ENCODE measurements at regions of chr7 and their contacts with region 1.

Region 1: GRCh38 chr7:55400191-55400590 is 35.1 kb downstream of the LANCL2 start:
- DNase-seq: no peak
- H3K27ac ChIP-seq: no peak overlapping the region
- CTCF ChIP-seq: no peak

Region 2: GRCh38 chr7:55158541-55159382 is 241.4 kb before region 1 on chr7:
- CTCF ChIA-PET with region 1: no interaction called
- POLR2A ChIA-PET with region 1: no interaction called
- DNase-seq: no peak
- H3K27ac ChIP-seq: peak overlapping the region; percentile 31
- CTCF ChIP-seq: no peak

Region 3: GRCh38 chr7:55185941-55186609 is 214.1 kb before region 1 on chr7:
- CTCF ChIA-PET with region 1: no interaction called
- POLR2A ChIA-PET with region 1: no interaction called
- DNase-seq: peak; percentile 98
- H3K27ac ChIP-seq: peak overlapping the region; percentile 85
- CTCF ChIP-seq: no peak

Region 4: DNA sequence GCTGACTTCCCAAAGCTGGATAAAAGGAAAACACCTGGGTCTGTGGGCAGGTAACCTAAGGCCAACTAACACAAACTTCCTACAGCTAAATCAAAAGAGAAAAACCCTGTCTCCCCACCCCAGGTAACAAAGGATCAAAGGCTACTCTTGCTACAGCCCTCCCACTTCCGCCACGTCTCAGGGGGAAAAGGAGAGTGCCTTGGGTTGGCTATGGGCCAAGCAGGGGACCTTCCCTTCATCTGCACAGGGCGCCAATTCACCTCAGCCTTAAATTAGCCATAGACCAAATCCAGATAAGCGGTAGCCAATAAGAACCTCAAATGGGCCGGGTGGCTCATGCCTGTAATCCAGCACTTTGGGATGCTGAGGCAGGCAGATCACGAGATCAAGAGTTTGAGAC is 104.1 kb before region 1 on chr7:
- CTCF ChIA-PET with region 1: no interaction called
- POLR2A ChIA-PET with region 1: interaction called, 12 read pairs
- DNase-seq: no peak
- H3K27ac ChIP-seq: no peak overlapping the region
- CTCF ChIP-seq: no peak

Region 5: DNA sequence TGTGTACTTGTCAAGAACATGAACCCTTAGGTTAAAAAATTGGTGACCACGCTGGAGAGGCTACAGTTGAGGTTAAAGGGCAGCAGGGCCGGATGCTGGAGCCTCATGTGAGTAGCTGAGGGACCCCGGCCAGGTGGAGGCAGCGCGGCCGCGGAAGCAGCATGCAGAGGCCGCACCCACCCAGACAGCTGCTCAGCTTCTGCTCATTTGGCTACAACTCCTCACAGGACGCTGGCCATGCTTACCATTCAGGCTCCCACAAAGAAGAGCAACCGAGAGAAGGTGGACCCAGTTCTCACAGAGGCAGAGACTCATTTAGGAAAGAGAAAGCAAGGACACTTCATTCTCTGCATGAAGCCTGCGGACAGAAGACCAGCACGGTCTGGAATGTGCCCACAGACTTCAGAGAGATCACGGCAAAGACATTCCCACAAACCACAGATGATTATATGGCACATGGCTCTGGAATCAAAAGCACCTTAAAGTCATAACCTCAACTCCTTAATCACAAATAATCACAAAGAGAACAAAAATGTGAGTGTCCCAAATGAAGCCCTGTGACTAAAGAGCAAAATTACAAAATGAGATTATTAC is 77.7 kb after region 1 on chr7:
- CTCF ChIA-PET with region 1: no interaction called
- POLR2A ChIA-PET with region 1: no interaction called
- DNase-seq: no peak
- H3K27ac ChIP-seq: no peak overlapping the region
- CTCF ChIP-seq: no peak

Region 6: DNA sequence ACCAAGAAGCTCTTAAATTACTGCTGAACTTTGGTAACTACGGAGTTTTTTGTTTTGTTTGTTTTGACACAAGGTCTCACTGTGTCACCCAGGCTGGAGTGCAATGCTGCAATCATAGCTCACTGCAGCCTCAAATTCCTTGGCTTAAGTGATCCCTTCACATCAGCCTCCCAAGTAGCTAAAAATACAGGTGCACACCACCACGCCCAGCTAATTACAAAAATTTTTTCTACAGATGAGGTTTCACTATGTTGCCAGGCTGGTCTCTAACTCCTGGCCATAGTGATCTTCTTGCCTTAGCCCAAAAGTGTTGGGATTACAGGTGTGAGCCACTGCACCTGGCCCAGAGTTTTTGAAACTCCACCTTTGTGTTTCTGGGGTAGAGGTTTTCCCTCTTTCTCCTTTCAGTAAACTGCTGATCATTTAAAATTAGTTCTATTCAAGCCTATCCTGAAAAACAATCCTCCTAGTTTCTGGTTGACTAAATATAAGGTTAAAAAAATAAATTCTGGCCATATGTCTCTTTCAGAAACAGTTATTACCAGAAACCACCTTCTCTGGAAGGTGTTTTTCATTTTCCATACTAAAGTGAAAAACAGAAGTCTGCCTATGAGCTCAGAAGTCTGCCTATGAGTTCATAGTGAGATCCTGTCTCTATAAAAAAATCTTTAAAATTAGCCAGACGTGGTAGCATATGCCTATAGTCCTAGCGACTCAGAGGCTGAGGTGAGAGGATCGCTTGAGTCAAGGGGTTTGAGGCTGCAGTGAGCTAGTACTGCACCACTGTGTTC is 108.2 kb after region 1 on chr7:
- CTCF ChIA-PET with region 1: no interaction called
- POLR2A ChIA-PET with region 1: no interaction called
- DNase-seq: no peak
- H3K27ac ChIP-seq: no peak overlapping the region
- CTCF ChIP-seq: no peak